ENCODE measurements at regions of chr2 and their contacts with region 1.

Region 1: GRCh38 chr2:197075759-197076337 is 149.3 kb upstream of the PGAP1 start:
- DNase-seq: peak; percentile 22
- ATAC-seq: no peak
- H3K4me3 Mint-ChIP-seq: no peak overlapping the region
- H3K27ac Mint-ChIP-seq: no peak overlapping the region
- H3K4me1 Mint-ChIP-seq: peaks cover 40% of the 10 kb centered on the region
- H3K27me3 Mint-ChIP-seq: no peaks in the 10 kb centered on the region

Region 2: GRCh38 chr2:197378494-197379307 is 302.9 kb after region 1 on chr2:
- CTCF ChIA-PET with region 1: interaction called, 3 read pairs
- POLR2A ChIA-PET with region 1: no interaction called
- intact Hi-C with region 1: loop called in 1 of 2 experiments (anchors 1 kb)
- DNase-seq: peak; percentile 80
- ATAC-seq: peak; percentile 83
- H3K4me3 Mint-ChIP-seq: no peak overlapping the region
- H3K27ac Mint-ChIP-seq: no peak overlapping the region
- H3K4me1 Mint-ChIP-seq: peaks cover 19% of the 10 kb centered on the region
- H3K27me3 Mint-ChIP-seq: no peaks in the 10 kb centered on the region

Measured in activated CD4-positive, alpha-beta T cell treated with anti-CD3 and anti-CD28 coated beads for 36 hours (primary cell).